Activated CD4-positive, alpha-beta memory T cell treated with anti-CD3 and anti-CD28 coated beads for 36 hours (primary cell): ENCODE measurements at regions of chr1 and their contacts with region 1.

Region 1: DNA sequence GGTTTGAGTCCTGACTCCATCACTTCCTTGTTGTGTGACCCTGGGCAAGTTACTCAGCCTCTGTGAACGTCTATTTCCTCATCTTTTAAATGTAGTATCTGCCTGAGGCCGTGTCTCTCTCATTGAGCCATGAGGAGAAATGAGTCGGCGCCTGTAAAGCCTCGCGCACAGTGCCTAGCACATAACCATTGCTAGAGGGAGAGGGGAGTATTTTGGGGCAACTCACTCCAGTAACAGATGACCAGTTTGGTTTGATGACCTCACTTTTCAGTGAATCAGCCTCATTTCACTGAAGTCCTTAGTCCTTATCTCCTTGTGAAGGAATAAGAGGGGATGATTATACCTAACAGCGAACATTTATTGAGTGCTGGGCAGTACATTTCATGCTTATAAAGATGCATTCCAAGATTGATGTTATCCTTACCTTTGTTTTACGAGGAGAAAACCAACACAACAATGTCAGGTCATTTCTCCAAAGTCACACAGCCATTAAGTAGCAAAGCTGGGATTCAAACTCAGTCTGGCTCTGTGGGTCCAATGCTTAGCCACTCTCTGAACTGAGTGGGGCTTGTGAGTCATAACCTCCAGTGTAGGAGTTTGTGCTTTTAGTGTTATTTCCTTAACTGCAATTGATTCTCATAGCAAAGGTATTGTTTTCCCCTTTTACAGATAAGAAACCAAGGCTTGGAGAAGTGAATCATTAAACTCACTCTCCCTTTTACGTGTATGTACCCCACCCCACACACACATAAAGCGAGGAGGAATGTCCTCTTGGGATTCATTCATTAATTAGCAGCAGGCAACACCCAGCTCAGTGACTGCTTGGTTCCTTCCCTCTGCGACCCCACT is 25.9 kb downstream of the KCNC4 start:
- DNase-seq: peak; percentile 86
- H3K4me3 Mint-ChIP-seq: peak overlapping the region; percentile 22
- H3K27ac Mint-ChIP-seq: peak overlapping the region; percentile 97
- H3K4me1 Mint-ChIP-seq: peaks cover 56% of the 10 kb centered on the region
- H3K27me3 Mint-ChIP-seq: no peaks in the 10 kb centered on the region

Region 2: GRCh38 chr1:109895720-109896504 is 340.1 kb before region 1 on chr1:
- CTCF ChIA-PET with region 1: no interaction called
- POLR2A ChIA-PET with region 1: no interaction called
- intact Hi-C with region 1: loop called (anchors 5 kb)
- DNase-seq: peak; percentile 60
- H3K4me3 Mint-ChIP-seq: no peak overlapping the region
- H3K27ac Mint-ChIP-seq: peak overlapping the region; percentile 28
- H3K4me1 Mint-ChIP-seq: peaks cover 15% of the 10 kb centered on the region
- H3K27me3 Mint-ChIP-seq: peaks cover 2% of the 10 kb centered on the region

Region 3: DNA sequence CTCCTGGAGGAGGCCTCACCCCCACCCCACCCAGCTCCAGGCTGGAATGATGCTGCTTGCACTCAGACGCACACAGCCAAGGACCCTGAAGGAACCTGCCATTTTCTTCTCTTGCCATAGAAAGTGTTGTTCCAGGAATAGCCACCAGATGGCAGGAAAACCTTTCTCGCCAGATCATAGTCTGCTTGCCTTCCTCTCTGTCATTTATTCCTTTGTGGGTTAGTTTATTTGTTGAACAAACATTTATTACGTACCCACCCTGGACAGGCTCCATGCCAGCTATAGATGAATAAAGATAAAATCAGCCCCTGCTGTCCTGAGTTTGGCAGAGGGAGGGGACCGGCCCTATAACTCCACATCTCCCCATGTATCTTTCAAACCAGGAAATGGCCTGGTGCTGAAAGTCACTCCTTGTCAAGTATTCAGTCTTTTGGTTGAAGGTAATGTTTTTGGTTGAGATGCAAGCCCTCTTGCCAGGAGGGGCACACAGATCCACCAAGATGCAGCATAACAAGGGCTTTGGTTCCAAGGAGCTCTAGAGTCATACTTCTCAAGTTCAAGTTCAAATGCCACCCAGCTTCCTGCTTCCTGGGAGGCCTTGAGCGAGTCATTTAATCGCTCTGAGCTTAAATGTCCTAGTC is 32.9 kb before region 1 on chr1:
- CTCF ChIA-PET with region 1: interaction called, 22 read pairs
- POLR2A ChIA-PET with region 1: no interaction called
- intact Hi-C with region 1: loop called (anchors 5 kb)
- DNase-seq: peak; percentile 73
- H3K4me3 Mint-ChIP-seq: no peak overlapping the region
- H3K27ac Mint-ChIP-seq: peak overlapping the region; percentile 83
- H3K4me1 Mint-ChIP-seq: peaks cover 15% of the 10 kb centered on the region
- H3K27me3 Mint-ChIP-seq: no peaks in the 10 kb centered on the region